MCF 10A (cell line): ENCODE measurements at regions of chrX and their contacts with region 1.

Region 1: GRCh38 chrX:3037218-3037617 is 4.1 kb upstream of the ARSF start:
- DNase-seq: no peak
- H3K4me3 Mint-ChIP-seq: no peak overlapping the region
- H3K27ac Mint-ChIP-seq: no peak overlapping the region
- H3K4me1 Mint-ChIP-seq: no peaks in the 10 kb centered on the region
- H3K27me3 Mint-ChIP-seq: peaks cover 21% of the 10 kb centered on the region
- CTCF ChIP-seq: no peak

Region 2: GRCh38 chrX:3576886-3577501 is 539.8 kb after region 1 on chrX:
- CTCF ChIA-PET with region 1: no interaction called
- POLR2A ChIA-PET with region 1: no interaction called
- intact Hi-C with region 1: no loop called
- DNase-seq: no peak
- H3K4me3 Mint-ChIP-seq: no peak overlapping the region
- H3K27ac Mint-ChIP-seq: no peak overlapping the region
- H3K4me1 Mint-ChIP-seq: peaks cover 6% of the 10 kb centered on the region
- H3K27me3 Mint-ChIP-seq: peaks cover 31% of the 10 kb centered on the region
- CTCF ChIP-seq: no peak

Region 3: GRCh38 chrX:3638280-3638873 is 601.2 kb after region 1 on chrX:
- CTCF ChIA-PET with region 1: interaction called, 4 read pairs
- POLR2A ChIA-PET with region 1: interaction called, 3 read pairs
- intact Hi-C with region 1: loop called (anchors 1 kb)
- DNase-seq: peak; percentile 72
- H3K4me3 Mint-ChIP-seq: no peak overlapping the region
- H3K27ac Mint-ChIP-seq: no peak overlapping the region
- H3K4me1 Mint-ChIP-seq: no peaks in the 10 kb centered on the region
- H3K27me3 Mint-ChIP-seq: no peaks in the 10 kb centered on the region
- CTCF ChIP-seq: peak; percentile 67